HEK293T (cell line): ENCODE measurements at regions of chr2 and their contacts with region 1.

Region 1: DNA sequence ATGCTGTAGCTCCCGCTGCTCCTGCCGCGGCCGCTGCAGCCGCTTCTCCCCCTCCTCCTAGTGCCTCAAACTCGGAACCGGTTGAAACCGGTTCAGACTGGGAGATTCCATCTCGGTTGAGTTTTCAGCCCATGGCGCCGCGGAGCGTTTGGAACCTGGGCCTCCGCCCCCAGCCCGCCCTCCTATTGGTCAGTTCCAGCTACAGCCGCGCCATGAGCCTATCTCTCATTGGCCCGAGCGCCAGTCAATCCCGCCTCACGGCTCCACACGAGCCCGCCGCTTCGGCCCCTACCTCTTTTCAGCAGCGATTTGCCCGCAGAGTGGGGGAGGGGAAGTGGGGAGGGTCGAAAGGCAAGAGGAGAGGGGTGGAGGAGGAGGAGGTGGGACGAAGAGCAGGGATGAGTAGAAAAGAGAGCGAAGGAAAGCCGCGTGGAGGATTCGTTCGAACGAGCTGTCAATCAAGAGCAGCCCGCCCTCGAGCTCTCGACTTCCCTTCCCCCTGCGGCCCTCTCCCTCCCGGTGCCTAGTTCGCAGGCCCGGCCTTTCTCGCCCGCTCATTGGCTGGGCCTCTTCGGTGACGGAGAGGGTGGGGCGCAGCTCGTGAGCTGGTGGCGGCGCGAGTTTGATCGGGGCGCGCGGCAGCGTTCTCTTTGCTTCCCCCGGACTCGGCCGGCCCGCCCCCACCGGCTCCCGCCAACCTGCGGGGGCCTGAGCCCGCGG is at the start of gene XPO1:
- DNase-seq: peak; percentile 95

Region 2: DNA sequence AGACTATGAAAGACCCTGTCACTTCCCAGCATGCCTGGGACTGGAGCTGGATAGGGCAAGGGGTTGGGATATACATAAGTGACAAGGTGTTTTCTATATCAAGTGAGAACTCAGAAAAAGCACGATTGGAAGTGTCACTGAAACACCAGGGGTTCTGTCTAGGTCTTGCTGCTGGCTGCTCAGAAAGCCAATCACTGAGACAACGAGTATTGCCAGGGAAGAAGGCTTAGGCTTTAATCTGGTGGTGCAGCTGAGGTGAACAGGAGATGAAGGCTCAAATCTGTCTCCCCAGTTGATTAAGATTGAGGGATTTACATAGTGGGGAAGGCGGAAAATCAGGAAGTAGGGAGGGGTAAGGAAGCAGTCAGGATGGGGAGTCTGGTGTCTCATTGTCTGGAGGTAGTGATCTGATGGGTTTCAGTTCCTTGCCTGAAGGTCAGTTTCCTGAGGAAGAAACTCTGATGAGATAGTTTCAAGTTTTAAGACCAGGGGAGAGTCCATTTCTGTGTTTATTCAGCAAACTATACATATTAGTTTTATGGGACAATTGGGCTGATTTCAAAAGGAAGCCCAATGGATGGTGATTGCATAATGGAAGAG is 379.9 kb before region 1 on chr2:
- CTCF ChIA-PET with region 1: no interaction called
- POLR2A ChIA-PET with region 1: no interaction called
- DNase-seq: no peak

Region 3: GRCh38 chr2:61434314-61434713 is 104.0 kb before region 1 on chr2:
- CTCF ChIA-PET with region 1: no interaction called
- POLR2A ChIA-PET with region 1: no interaction called
- DNase-seq: no peak

Region 4: GRCh38 chr2:61549546-61549945 is 11.2 kb after region 1 on chr2:
- CTCF ChIA-PET with region 1: no interaction called
- POLR2A ChIA-PET with region 1: interaction called, 13 read pairs
- DNase-seq: no peak

Region 5: GRCh38 chr2:61585383-61585782 is 47.0 kb after region 1 on chr2:
- CTCF ChIA-PET with region 1: no interaction called
- POLR2A ChIA-PET with region 1: no interaction called
- DNase-seq: no peak

Region 6: DNA sequence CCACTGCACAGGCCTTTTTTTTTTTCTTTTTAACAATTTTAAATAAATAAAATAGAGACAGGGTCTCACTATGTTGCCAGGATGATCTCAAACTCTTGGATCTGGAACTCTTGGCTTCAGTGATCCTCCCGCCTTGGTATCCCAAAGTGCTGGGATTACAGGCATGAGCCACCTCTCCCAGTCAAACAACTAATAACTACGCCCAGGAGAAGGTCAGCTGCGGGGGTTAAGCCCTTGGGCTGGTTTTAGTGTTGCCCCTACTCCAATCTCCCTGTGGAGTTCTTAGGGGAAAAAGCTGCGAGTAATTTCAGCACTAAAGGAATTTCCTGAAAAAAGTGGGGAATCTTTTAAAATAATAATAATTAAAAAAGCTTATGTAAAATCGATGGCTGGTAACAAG is 96.2 kb after region 1 on chr2:
- CTCF ChIA-PET with region 1: no interaction called
- POLR2A ChIA-PET with region 1: interaction called, 11 read pairs
- DNase-seq: no peak

Region 7: DNA sequence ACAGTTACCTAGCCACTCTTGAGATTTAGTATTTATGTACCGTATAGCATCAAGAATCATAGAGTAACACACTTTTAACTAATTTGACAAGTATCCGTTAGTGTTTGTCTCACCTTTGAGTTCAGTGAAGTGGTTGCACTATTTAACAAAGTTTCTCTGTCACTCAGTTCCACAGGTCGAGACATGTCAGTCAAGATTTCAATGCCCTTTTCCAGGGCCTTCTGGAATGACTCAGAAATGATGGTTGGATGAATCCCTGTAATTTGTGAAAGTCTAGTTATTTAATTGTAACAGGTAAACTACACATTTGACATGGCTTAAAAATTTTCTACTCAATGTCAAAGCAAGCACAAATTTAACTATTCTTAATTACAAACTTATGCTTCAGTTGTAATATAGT is 340.4 kb after region 1 on chr2:
- CTCF ChIA-PET with region 1: no interaction called
- POLR2A ChIA-PET with region 1: no interaction called
- DNase-seq: no peak